ENCODE measurements at regions of chr2 and their contacts with region 1.

Region 1: DNA sequence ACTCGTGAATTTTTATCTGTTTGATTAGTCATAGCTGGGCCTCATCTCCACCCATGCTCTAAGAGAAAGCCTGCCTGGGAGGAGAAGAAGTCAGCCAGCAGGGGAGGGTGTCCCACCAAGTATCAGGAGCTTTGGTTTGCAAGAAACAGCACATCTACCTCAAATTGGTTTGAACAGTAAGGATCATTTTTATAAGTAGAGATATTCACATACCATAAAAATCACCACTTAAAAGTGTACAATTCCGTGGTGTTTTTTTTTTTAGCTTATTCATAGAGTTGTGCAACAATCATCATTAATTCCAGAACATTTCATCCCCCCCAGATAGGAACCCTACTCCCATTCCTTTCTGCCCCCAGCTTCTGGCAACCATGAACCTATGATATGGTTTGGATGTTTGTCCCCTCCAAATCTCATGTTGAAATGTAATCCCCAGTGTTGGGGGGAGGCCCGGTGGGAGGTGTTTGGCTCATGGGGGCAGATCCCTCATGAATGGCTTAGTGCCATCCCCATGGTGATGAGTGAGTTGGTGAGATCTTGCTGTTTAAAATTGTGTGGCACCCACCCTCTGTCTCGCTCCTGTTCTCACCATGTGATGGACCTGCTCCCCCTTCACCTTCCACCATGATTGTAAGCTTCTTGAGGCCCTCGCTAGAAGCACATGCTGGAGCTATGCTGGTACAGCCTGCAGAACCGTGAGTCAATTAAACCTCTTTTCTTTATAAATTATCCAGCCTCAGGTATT is 36.2 kb upstream of the HS6ST1 start:
- DNase-seq: no peak
- ATAC-seq: no peak
- H3K4me3 ChIP-seq: no peak overlapping the region
- H3K27ac ChIP-seq: no peak overlapping the region
- H3K4me1 ChIP-seq: no peaks in the 10 kb centered on the region
- H3K27me3 ChIP-seq: no peaks in the 10 kb centered on the region
- CTCF ChIP-seq: no peak

Region 2: GRCh38 chr2:128449226-128450061 is 94.5 kb after region 1 on chr2:
- intact Hi-C with region 1: loop called in 1 of 10 experiments (anchors 10 kb)
- DNase-seq: no peak
- ATAC-seq: peak in 4 of 8 donors; percentile 31 to 57 (median 42)
- H3K4me3 ChIP-seq: no peak overlapping the region
- H3K27ac ChIP-seq: no peak overlapping the region
- H3K4me1 ChIP-seq: peaks cover 0 to 16% (median 0%) of the 10 kb centered on the region in 9 donors
- H3K27me3 ChIP-seq: peaks cover 0 to 6% (median 0%) of the 10 kb centered on the region in 7 donors
- CTCF ChIP-seq: no peak